CD8-positive, alpha-beta T cell (primary cell): ENCODE measurements at regions of chr1 and their contacts with region 1.

Region 1: GRCh38 chr1:234755449-234755863 is 145.5 kb upstream of the IRF2BP2 start:
- DNase-seq: no peak
- ATAC-seq: no peak
- H3K4me3 ChIP-seq: no peak overlapping the region
- H3K4me3 Mint-ChIP-seq: no peak overlapping the region
- H3K27ac ChIP-seq: no peak overlapping the region
- H3K27ac Mint-ChIP-seq: no peak overlapping the region
- H3K4me1 ChIP-seq: peaks cover 37% of the 10 kb centered on the region
- H3K4me1 Mint-ChIP-seq: peaks cover 41% of the 10 kb centered on the region
- H3K27me3 ChIP-seq: no peaks in the 10 kb centered on the region
- H3K27me3 Mint-ChIP-seq: no peaks in the 10 kb centered on the region
- CTCF ChIP-seq: no peak

Region 2: DNA sequence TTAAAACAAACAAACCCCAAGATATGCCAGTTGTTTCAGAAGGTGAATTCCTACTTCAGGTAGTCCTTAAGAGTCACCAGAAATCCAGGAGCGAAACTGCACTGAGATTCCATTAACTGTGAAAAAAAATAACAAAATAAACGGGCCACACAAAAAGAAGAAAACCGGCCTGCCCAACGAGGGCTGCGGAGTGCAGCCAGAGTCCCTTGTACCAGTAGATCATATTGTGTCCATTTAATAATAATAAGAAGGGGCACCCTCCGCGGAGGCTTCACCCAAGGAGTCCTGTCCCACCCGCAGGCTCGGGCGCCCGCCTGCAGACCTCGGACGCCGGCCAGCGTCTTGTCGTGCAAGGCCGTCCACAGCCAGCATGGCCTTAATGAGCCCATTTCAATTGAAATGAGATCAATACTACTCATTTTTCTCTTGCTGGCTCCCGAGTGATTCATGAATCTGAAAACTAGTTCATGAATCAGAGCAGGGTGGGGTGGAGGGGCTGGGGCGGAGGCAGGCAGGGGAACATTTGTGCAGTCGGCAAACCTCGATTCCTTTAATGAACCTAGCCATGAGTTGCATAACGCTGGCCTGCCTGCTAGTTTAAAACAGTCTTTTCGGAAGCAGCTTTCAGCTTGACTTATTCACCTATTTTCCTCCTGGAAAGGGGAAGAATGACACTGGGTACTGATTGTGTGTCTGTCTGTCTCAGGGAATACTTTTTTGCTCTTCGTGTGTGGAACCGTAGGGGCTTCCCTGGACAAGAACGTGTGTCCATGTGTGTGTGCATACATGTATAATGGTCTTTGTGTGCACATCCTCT is 32.3 kb before region 1 on chr1:
- CTCF ChIA-PET with region 1: interaction called, 4 read pairs
- POLR2A ChIA-PET with region 1: interaction called, 12 read pairs
- intact Hi-C with region 1: loop called (anchors 2 kb)
- DNase-seq: peak in 8 of 9 experiments; percentile 37 to 76 (median 58)
- ATAC-seq: peak; percentile 26
- H3K4me3 ChIP-seq: peak overlapping the region; percentile 28 to 34
- H3K4me3 Mint-ChIP-seq: peak overlapping the region; percentile 71
- H3K27ac ChIP-seq: peak overlapping the region; percentile 83 to 96
- H3K27ac Mint-ChIP-seq: peak overlapping the region; percentile 92
- H3K4me1 ChIP-seq: peaks cover 38% of the 10 kb centered on the region
- H3K4me1 Mint-ChIP-seq: peaks cover 61% of the 10 kb centered on the region
- H3K27me3 ChIP-seq: no peaks in the 10 kb centered on the region
- H3K27me3 Mint-ChIP-seq: no peaks in the 10 kb centered on the region
- CTCF ChIP-seq: no peak

Region 3: DNA sequence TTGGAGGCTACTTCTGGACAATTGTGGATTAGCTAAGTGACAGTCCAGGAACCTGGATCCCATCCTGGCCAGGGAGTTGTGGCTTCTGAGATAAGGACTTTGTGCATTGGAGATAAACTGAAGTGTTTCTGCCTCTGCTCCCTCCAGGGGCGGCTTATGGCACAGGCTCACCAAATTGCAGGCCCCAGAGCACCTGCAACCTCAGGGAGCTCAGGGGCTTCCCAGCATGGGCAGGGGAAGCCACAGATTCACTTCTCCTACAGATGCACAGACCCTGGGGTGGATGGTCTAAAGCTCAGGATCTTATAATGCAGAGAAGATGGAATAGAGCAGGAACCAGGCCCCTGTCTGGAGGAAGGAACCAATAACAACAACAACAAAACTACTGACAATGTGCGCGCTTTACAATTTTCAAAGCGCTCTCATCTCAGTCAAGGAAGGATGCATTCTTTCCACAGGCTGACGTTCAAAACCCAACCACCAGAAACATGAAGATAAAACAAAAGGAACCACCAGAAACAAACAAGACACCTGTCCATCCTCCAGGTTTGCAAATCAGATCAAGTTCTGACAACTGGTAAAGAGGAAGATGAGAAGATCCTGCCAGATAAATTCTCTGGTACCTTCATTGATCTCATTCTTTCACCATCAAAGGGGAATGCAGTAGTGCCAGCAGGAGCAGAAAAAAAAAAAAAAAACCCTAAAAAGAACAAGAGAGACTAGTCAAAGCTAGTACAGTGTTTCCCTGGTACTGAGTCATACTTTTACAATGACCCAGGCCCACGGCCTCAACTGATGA is 24.5 kb before region 1 on chr1:
- CTCF ChIA-PET with region 1: interaction called, 4 read pairs
- POLR2A ChIA-PET with region 1: interaction called, 12 read pairs
- intact Hi-C with region 1: loop called in 1 of 2 experiments (anchors 2 kb)
- DNase-seq: peak in 7 of 9 experiments; percentile 4 to 81 (median 54)
- ATAC-seq: peak; percentile 77
- H3K4me3 ChIP-seq: no peak overlapping the region
- H3K4me3 Mint-ChIP-seq: peak overlapping the region; percentile 8
- H3K27ac ChIP-seq: peak overlapping the region in 1 of 2 experiments; percentile 43
- H3K27ac Mint-ChIP-seq: peak overlapping the region; percentile 72
- H3K4me1 ChIP-seq: peaks cover 37% of the 10 kb centered on the region
- H3K4me1 Mint-ChIP-seq: peaks cover 45% of the 10 kb centered on the region
- H3K27me3 ChIP-seq: no peaks in the 10 kb centered on the region
- H3K27me3 Mint-ChIP-seq: no peaks in the 10 kb centered on the region
- CTCF ChIP-seq: no peak

Region 4: DNA sequence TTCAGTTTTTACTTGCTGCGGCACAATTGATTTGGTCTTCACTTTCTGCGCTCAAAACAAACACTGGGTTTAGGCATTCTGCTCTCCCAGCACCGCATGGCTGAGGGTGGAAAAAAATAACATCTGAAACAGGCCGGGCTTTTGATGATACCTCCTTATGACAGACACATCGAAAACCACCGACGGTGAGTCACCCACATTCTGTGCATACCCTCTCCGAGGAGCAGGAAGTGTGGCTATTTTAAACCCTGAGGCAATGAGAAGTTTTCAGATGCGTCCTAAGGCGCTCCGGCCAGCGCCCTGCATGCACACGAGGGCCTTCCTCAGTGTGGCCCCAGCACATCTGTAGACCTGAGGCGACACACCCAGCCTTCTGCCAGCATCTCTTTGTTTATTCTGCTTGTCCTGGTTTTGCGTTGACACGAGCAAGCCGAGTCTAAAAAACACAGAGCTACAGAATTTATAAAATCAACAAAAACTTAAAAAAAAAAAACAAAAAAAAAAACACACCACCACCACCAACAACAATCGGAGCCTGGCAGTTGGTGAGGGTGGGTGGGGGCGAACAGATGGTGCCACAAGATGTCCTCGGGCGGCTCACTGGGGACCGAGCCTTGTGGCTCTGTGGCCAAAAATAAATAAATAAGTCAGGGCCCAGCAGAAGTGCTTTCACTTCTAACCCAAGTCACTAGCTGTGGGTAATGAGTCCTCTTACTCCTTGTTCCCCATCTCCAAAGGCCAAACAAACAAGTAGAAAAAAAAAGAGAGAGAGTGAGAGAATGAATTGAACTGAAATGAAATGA is 17.1 kb after region 1 on chr1:
- CTCF ChIA-PET with region 1: interaction called, 4 read pairs
- POLR2A ChIA-PET with region 1: interaction called, 7 read pairs
- intact Hi-C with region 1: loop called (anchors 1 kb)
- DNase-seq: peak; percentile 59 to 95 (median 85)
- ATAC-seq: peak; percentile 80
- H3K4me3 ChIP-seq: peak overlapping the region in 1 of 2 experiments; percentile 23
- H3K4me3 Mint-ChIP-seq: peak overlapping the region; percentile 66
- H3K27ac ChIP-seq: peak overlapping the region; percentile 39 to 73
- H3K27ac Mint-ChIP-seq: peak overlapping the region; percentile 94
- H3K4me1 ChIP-seq: peaks cover 58% of the 10 kb centered on the region
- H3K4me1 Mint-ChIP-seq: peaks cover 54% of the 10 kb centered on the region
- H3K27me3 ChIP-seq: no peaks in the 10 kb centered on the region
- H3K27me3 Mint-ChIP-seq: no peaks in the 10 kb centered on the region
- CTCF ChIP-seq: no peak

Region 5: DNA sequence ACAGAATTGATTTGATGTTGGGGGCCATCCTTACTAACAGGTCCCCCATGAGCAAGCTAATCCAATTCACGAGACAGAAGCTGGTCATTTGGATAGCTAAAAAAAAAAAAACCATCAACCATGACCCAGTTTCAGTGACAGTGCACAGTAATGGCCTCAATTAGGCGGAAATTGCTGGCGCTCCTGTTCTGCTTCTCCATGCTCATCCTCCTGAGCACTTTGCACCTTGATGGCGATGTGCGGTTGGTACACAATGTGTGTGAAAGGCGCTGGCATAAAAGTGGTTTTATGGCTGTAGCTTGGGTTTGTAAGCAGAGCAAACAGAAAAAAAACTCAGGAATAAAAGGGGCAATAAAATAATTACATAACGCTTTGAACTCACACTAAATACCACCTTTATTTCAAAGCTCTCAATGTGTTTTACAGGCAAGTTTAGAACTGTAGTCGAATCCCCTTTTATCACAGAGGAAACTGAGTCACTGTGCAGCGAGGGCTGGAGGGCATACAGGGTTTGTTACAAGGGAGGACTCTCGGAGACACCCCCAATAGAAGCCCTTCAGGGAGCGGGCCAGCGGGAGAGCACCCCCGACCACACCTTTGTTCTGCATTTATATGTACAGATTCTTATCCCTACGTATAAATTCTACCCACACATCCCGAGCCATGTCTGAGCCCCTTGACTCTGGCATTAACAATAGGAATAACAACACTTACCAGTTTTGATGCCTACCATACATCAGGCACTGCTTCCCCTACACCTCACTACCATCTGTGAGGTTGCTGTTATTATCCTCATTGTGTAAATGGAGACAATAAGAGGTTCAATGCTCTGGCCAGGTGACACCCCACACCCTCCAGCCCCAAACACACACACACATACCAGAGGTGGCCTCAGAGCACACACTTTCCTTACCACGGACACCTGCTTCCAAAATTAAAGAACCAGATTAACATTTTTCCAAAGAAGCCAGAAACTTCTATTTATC is 68.0 kb after region 1 on chr1:
- CTCF ChIA-PET with region 1: no interaction called
- POLR2A ChIA-PET with region 1: no interaction called
- intact Hi-C with region 1: loop called in 1 of 2 experiments (anchors 10 kb)
- DNase-seq: no peak
- ATAC-seq: no peak
- H3K4me3 ChIP-seq: no peak overlapping the region
- H3K4me3 Mint-ChIP-seq: no peak overlapping the region
- H3K27ac ChIP-seq: no peak overlapping the region
- H3K27ac Mint-ChIP-seq: no peak overlapping the region
- H3K4me1 ChIP-seq: no peaks in the 10 kb centered on the region
- H3K4me1 Mint-ChIP-seq: no peaks in the 10 kb centered on the region
- H3K27me3 ChIP-seq: peaks cover 0 to 2% of the 10 kb centered on the region in 2 experiments
- H3K27me3 Mint-ChIP-seq: no peaks in the 10 kb centered on the region
- CTCF ChIP-seq: no peak

Region 6: DNA sequence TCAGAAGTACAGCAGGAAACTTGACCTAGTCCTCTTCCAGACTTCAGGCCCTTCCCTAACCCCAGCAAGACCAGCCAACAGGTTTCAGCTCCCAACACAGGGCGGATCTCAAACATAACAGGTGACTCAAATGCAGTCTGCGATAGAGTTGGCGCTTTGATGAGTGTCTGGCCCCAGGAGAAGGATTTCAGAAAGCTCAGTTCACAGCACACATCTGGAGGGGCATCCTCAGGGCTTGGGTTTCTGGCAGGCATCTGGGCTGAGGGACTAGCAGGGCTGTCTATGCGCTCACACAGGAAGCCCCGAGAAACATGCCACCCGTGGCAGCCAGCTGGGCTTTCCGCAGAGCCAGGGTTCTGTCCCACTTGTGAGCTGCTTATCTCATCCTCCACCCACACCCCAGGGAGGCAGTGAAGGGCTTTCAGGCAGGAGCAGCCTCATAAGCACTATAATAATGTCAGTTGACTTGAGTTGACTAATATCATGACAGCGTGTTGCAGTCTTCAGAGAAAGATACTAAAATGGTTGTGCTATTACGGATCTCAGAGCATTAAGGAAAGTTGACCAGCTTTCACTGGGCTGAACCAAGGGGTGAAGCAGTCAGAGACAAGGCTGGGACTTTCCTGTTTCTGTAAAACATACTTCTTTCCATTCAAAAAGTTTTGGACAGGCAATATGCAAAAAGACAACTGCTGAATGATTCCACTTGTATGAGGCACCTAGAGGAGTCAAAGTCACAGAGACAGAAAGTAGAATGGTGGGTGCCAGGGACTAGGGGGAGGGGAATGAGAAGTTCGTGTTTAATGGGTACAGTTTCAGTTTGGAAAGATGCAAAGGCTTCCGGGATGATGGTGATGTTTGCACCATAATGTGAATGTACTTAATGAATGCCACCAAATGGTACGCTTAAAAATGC is 87.5 kb after region 1 on chr1:
- CTCF ChIA-PET with region 1: no interaction called
- POLR2A ChIA-PET with region 1: no interaction called
- intact Hi-C with region 1: loop called in 1 of 2 experiments (anchors 2 kb)
- DNase-seq: peak; percentile 10 to 76 (median 51)
- ATAC-seq: peak; percentile 48
- H3K4me3 ChIP-seq: no peak overlapping the region
- H3K4me3 Mint-ChIP-seq: peak overlapping the region; percentile 49
- H3K27ac ChIP-seq: no peak overlapping the region
- H3K27ac Mint-ChIP-seq: peak overlapping the region; percentile 75
- H3K4me1 ChIP-seq: peaks cover 53% of the 10 kb centered on the region
- H3K4me1 Mint-ChIP-seq: peaks cover 57% of the 10 kb centered on the region
- H3K27me3 ChIP-seq: no peaks in the 10 kb centered on the region
- H3K27me3 Mint-ChIP-seq: no peaks in the 10 kb centered on the region
- CTCF ChIP-seq: no peak